ENCODE measurements at regions of chr2 and their contacts with region 1.

Region 1: GRCh38 chr2:232632908-232633732 is at the start of gene EFHD1:
- DNase-seq: peak; percentile 81 to 87
- H3K4me3 ChIP-seq: peak within 1 kb of the TSS; percentile 39 to 77 (median 64)
- H3K27ac ChIP-seq: peak within 1 kb of the TSS; percentile 34 to 78 (median 61)
- H3K4me1 ChIP-seq: peaks cover 4 to 13% of the 10 kb centered on the region in 2 donors
- H3K27me3 ChIP-seq: no peaks in the 10 kb centered on the region
- CTCF ChIP-seq: peak in 1 of 6 experiments; percentile 34
- POLR2A ChIP-seq: peak; percentile 63 to 77
- total RNA-seq, gene EFHD1: 6.9 to 17.5 (median 14.8) TPM

Region 2: DNA sequence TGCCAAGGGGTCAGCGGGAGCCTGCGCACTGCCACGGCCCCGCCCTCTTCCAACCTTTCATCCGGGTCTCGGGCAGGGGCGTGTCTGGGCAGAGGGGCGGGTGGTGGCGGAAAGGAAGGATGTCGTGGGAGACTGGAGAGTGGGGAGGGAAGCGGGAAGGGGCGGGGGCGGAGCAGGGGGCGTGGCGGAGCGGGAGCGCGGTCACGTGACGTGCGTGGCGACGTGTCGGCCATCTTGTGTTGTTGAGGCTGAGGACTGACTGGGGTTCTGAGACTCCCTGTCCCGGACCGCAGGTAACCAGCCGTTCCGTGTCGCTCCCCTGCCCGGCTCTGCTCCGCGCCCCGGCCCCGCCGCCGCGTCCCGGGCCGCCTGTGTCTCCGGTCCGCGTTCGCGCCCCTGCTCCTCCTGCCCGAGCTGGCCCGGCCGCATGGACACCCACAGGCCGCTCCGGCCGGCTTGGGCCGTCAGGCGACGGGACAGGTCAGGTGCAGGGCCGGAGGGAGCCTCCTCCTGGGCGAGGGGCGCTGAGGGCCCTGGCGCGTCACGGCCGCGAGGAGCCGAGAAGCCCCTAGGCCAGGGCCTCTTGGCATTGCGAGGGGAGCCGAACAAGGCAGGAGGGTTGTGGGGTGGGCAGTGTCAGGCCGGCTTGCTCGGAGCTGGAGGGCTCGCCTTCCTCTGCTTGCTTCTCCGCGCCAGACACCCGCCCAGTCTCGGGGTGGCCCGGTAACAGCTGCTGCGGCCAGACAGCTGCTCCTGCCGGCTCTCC is 64.2 kb after region 1 on chr2 and contains the start of gene GIGYF2:
- intact Hi-C with region 1: loop called (anchors 10 kb)
- DNase-seq: peak; percentile 98
- H3K4me3 ChIP-seq: peak within 1 kb of the TSS; percentile 90 to 99 (median 94)
- H3K27ac ChIP-seq: peak within 1 kb of the TSS; percentile 92 to 97 (median 93)
- H3K4me1 ChIP-seq: peaks cover 21 to 35% of the 10 kb centered on the region in 2 donors
- H3K27me3 ChIP-seq: no peaks in the 10 kb centered on the region
- CTCF ChIP-seq: no peak
- POLR2A ChIP-seq: peak in 1 of 2 donors; percentile 77
- total RNA-seq, gene GIGYF2: 88.7 to 138 (median 101) TPM

Region 3: DNA sequence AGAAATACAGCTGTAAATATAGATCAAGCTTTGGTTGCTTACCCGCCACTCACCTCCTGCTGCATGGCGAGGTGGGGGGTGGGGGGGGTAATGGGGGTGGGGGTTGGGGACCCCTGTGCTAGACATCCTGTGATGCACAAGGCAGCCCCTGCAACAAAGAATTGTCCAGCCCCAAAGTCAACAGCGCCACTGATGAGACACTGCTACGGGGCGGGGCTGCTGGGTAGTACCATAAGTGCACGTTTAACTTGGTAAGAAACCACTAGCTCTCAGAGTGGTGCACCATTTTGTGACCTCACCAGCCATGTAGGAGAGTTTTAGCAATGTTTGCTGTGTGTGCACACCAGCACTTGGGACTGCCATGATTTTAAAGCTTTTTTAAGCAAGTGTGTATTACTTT is 277.3 kb after region 1 on chr2:
- intact Hi-C with region 1: no loop called
- DNase-seq: no peak
- H3K4me3 ChIP-seq: no peak overlapping the region
- H3K27ac ChIP-seq: no peak overlapping the region
- H3K4me1 ChIP-seq: no peaks in the 10 kb centered on the region
- H3K27me3 ChIP-seq: no peaks in the 10 kb centered on the region
- CTCF ChIP-seq: no peak
- POLR2A ChIP-seq: no peak

Measured in thyroid gland (tissue), 4 donors.